ENCODE measurements at regions of chr1 and their contacts with region 1.

Region 1: GRCh38 chr1:229661022-229661877 is 35.2 kb downstream of the URB2 start:
- DNase-seq: peak; percentile 88
- ATAC-seq: peak; percentile 64
- H3K4me3 Mint-ChIP-seq: no peak overlapping the region
- H3K27ac Mint-ChIP-seq: no peak overlapping the region
- H3K4me1 Mint-ChIP-seq: peaks cover 25% of the 10 kb centered on the region
- H3K27me3 Mint-ChIP-seq: no peaks in the 10 kb centered on the region

Region 2: DNA sequence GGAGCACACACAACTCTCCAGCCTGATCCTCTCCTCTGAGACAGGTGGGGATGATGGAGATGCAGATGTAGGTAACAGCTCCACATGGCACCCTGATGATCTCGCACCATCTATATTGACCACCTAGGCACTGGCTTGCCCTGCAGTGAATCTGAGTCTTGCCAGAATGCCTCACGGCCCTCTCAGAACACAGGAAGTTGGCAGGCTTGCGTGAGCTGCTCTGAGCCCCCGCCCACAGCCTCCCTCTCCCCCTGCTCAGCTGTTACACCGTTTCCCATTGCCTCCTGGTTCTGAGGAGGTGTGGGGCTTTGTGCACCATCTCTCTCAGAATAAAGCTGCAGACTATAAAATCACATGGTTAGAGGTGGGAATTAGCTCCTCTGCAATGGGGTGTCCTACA is 12.8 kb after region 1 on chr1:
- CTCF ChIA-PET with region 1: interaction called, 10 read pairs
- POLR2A ChIA-PET with region 1: no interaction called
- intact Hi-C with region 1: no loop called
- DNase-seq: peak; percentile 46
- ATAC-seq: peak; percentile 49
- H3K4me3 Mint-ChIP-seq: no peak overlapping the region
- H3K27ac Mint-ChIP-seq: no peak overlapping the region
- H3K4me1 Mint-ChIP-seq: peaks cover 18% of the 10 kb centered on the region
- H3K27me3 Mint-ChIP-seq: no peaks in the 10 kb centered on the region

Region 3: DNA sequence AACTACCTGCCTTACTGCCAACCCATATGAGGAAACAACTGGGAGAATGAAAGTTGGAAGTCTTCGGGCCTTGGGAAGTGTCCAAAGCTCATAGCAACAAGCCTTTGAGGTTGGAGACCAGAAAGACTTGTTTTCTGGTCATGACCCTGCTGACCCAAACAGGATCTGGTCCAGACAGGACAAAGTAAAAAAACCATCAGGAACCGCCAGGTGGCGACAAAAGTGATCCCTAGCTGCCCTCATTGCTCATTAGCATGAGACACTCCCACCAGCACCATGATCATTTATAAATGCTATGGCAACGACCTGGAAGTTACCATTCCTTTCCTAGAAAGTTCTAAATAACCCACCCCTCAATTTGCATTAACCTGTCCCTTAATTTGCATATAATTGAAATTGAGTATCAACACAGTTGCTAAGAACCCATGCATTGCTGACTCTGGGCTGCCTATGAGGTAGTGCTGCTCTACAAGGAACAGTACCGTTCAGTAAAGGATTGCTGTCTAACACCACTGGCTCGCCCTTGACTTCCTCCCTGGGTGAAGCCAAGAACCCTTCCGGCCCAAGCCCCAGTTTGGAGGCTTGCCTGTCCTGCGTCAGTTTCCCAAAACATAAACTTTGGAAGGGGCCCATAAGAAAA is 53.8 kb after region 1 on chr1:
- CTCF ChIA-PET with region 1: interaction called, 5 read pairs
- POLR2A ChIA-PET with region 1: no interaction called
- intact Hi-C with region 1: loop called in 1 of 2 experiments (anchors 2 kb)
- DNase-seq: peak; percentile 60
- ATAC-seq: peak; percentile 33
- H3K4me3 Mint-ChIP-seq: no peak overlapping the region
- H3K27ac Mint-ChIP-seq: no peak overlapping the region
- H3K4me1 Mint-ChIP-seq: no peaks in the 10 kb centered on the region
- H3K27me3 Mint-ChIP-seq: peaks cover 3% of the 10 kb centered on the region

Region 4: DNA sequence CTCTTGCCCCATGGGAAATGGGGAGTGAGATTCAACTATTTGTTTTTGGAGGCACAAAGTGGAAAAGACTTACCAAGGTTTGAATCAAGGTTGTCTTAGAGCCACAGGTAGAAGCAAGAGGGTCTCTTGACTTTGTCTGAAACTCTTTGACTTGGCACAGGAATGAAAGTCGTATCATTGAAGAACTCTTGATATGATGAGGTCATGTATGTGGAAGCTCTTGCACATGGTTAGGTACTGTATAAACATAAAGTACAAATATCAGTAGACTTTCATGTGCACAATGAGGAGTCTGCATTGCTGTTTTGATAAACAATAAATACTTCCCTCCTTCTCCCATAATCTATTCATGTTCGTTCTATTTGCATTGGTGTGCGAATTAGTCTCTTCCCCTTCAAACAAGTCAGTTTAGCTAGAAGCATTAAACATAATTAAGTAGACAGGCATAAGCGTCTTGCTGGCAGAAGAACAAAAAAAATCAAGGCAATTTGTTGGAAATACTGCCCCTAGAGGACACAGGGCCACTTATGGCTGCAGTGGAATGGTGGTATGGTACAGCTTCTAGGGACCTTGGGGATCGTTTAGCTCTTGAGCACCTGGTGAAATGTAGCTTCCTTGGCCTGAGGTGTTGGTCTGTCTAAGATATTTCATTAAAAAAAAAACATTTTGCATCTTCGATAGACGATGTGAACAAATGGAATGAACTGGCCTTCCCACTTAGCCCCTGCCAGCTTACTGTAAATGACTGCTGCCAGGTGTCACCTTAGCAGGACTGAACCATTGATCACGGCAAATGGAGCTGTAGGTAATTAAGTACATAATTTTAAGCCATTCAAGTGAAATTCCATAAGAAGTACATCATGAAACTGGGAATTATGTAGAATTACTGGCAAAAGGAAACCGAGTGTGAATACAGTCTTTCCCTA is 187.8 kb after region 1 on chr1:
- CTCF ChIA-PET with region 1: no interaction called
- POLR2A ChIA-PET with region 1: no interaction called
- intact Hi-C with region 1: loop called (anchors 2 to 10 kb)
- DNase-seq: peak; percentile 18
- ATAC-seq: peak; percentile 26
- H3K4me3 Mint-ChIP-seq: no peak overlapping the region
- H3K27ac Mint-ChIP-seq: no peak overlapping the region
- H3K4me1 Mint-ChIP-seq: no peaks in the 10 kb centered on the region
- H3K27me3 Mint-ChIP-seq: peaks cover 5% of the 10 kb centered on the region

Region 5: GRCh38 chr1:230104395-230105244 is 443.4 kb after region 1 on chr1:
- CTCF ChIA-PET with region 1: no interaction called
- POLR2A ChIA-PET with region 1: no interaction called
- intact Hi-C with region 1: loop called in 1 of 2 experiments (anchors 10 kb)
- DNase-seq: peak; percentile 95
- ATAC-seq: peak; percentile 78
- H3K4me3 Mint-ChIP-seq: peak overlapping the region; percentile 44
- H3K27ac Mint-ChIP-seq: peak overlapping the region; percentile 92
- H3K4me1 Mint-ChIP-seq: peaks cover 86% of the 10 kb centered on the region
- H3K27me3 Mint-ChIP-seq: no peaks in the 10 kb centered on the region

Region 6: DNA sequence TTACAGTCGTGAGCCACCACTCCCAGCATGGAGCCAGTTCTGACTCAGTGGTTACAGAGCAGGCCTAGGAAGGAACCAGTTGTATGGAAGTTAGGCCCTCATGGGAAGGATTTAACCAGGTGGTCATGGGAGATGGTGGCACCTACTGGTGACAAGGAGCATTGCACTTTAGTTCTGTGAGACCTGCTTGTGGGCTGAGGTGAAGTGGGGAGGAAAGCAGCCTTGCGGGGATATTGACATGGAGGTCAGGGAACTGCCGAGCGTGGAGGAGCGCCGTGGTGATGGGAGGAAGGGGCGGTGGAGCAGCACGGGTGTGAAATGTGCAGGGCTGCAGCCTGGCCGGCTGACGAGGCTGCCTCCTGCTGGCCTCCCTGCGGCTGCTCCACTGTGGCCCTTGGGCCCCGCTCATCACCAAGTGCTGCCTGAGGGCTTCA is 506.2 kb after region 1 on chr1:
- CTCF ChIA-PET with region 1: interaction called, 6 read pairs
- POLR2A ChIA-PET with region 1: no interaction called
- intact Hi-C with region 1: loop called (anchors 1 kb)
- DNase-seq: peak; percentile 59
- ATAC-seq: peak; percentile 66
- H3K4me3 Mint-ChIP-seq: no peak overlapping the region
- H3K27ac Mint-ChIP-seq: peak overlapping the region; percentile 40
- H3K4me1 Mint-ChIP-seq: peaks cover 43% of the 10 kb centered on the region
- H3K27me3 Mint-ChIP-seq: no peaks in the 10 kb centered on the region

Measured in activated CD4-positive, alpha-beta T cell treated with anti-CD3 and anti-CD28 coated beads for 36 hours (primary cell).